ENCODE measurements at regions of chr17 and their contacts with region 1.

Region 1: GRCh38 chr17:48131216-48131824 is 23.8 kb downstream of the SNX11 start:
- DNase-seq: no peak

Region 2: GRCh38 chr17:47670081-47670480 is 461.2 kb before region 1 on chr17:
- intact Hi-C with region 1: loop called in 1 of 2 experiments (anchors 5 kb)
- DNase-seq: no peak

Region 3: DNA sequence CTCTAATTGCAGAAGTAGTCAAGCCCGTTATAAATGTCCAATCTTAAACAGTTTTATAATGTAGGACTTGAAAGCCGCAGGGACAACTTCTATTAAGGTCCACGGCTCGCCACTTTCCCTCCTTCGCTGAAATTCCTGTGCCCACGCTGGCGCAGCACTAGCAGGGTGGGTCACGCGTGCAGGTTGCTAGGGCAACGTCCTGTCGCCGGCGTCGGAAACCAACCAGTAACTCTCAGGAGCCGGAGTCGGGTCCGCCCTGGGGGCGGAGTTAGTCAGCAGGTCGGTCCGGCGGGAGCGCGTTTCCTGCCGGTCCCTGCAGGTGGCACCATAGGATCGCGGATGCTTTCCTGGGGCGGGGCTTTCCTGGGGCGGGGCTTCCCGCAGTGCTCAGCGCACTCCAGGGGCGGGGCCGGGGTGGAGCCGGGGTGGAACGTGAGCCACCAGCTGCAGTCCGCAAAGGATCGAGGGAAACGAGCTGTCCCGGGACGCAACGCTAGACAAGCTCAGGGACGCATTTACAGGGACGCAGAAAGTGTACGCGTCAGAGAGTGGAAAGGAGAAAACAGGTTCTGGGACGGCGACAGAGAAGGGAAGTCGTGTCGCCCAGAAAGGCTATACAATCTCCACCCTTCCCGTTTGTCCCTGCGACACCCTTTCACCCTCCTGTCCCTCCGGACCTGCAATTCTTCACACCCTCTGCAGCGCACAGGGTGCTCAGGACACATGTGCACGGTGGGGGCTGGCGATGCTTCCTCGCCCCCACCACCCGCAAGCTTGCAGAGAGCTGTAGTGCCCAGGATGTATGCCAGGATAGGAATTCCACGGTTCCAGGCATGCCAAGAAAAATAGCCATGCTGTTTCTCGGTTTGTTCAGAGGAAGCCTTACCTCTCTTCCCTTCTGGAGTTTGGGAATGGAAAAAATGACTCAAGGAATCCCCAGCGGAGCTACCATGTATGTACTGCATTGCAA is 106.1 kb before region 1 on chr17:
- intact Hi-C with region 1: loop called (anchors 5 to 10 kb)
- DNase-seq: peak; percentile 100

Region 4: GRCh38 chr17:48074315-48075081 is 56.8 kb before region 1 on chr17:
- intact Hi-C with region 1: loop called in 1 of 2 experiments (anchors 10 kb)
- DNase-seq: peak; percentile 89

Measured in posterior vena cava (tissue), 2 donors.